CD4-positive, alpha-beta T cell (primary cell): ENCODE measurements at regions of chr12 and their contacts with region 1.

Region 1: GRCh38 chr12:89709157-89709994 is 738 bp upstream of the ATP2B1 start:
- DNase-seq: peak; percentile 97 to 100 (median 99)
- ATAC-seq: peak; percentile 77
- H3K4me3 ChIP-seq: peak overlapping the region; percentile 99
- H3K4me3 Mint-ChIP-seq: peak overlapping the region; percentile 98
- H3K27ac ChIP-seq: peak overlapping the region; percentile 88 to 97
- H3K27ac Mint-ChIP-seq: peak overlapping the region; percentile 97
- H3K4me1 ChIP-seq: peaks cover 25% of the 10 kb centered on the region
- H3K4me1 Mint-ChIP-seq: peaks cover 43% of the 10 kb centered on the region
- H3K27me3 ChIP-seq: no peaks in the 10 kb centered on the region
- H3K27me3 Mint-ChIP-seq: no peaks in the 10 kb centered on the region
- CTCF ChIP-seq: no peak

Region 2: DNA sequence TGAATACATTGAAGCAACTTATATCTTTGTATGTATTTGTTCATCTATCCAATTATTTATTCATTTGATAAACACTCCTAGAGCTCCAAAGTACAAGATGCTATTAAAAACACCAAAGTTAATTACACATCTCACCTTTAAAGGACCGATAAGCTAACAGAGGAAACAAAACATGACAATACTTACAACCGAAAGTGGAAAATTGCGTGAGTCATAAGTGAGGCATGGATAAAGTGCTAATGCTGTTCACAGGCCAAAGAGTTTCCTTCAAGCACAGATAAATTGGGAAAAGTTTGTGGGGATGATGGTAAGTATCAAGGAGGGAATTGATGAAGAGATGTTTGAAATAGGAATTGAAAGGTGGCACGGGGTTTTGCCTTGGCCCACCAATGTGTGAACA is 956.3 kb before region 1 on chr12:
- CTCF ChIA-PET with region 1: no interaction called
- POLR2A ChIA-PET with region 1: no interaction called
- intact Hi-C with region 1: no loop called
- DNase-seq: no peak
- ATAC-seq: no peak
- H3K4me3 ChIP-seq: no peak overlapping the region
- H3K4me3 Mint-ChIP-seq: no peak overlapping the region
- H3K27ac ChIP-seq: no peak overlapping the region
- H3K27ac Mint-ChIP-seq: no peak overlapping the region
- H3K4me1 ChIP-seq: no peaks in the 10 kb centered on the region
- H3K4me1 Mint-ChIP-seq: no peaks in the 10 kb centered on the region
- H3K27me3 ChIP-seq: no peaks in the 10 kb centered on the region
- H3K27me3 Mint-ChIP-seq: no peaks in the 10 kb centered on the region
- CTCF ChIP-seq: no peak

Region 3: DNA sequence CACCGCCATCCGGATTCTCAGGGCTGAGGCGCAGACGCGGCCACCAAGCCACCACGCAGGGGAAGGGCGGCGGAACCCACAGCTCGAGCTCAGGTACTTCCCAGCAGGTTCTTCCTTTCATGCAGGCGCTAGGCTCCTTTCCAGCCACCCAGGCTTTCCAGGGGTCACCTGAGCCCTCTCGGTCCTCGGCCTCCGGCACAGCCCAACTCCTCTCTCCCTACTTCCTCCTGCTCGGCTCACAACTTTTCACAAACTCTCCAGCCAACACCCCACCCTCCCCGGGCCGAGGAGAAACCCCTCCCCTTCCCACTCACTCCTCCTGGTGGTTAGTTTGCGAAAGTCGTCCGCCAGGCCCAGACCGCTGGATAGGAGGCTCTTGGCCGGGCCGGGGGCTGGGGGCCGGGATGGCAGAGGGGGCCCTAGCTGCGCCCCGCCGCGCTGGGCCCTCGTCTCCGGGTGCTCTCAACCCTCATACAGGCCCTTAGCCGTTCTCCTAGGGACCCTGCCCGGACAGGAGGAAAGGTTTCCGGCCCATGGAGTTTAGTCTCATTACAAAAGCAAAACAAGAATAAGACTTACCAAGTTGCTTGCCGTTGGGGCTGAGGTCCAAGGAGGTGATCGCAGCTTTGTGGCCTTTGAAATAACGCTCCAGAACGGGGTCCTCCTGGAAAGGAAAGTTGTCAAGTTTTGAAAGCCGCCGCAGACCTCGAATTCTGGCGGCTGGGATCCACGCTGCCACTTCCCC is 184.7 kb before region 1 on chr12 and contains the start of gene GALNT4:
- CTCF ChIA-PET with region 1: interaction called, 3 read pairs
- POLR2A ChIA-PET with region 1: interaction called, 14 read pairs
- intact Hi-C with region 1: loop called (anchors 5 kb)
- DNase-seq: peak; percentile 57 to 88 (median 68)
- ATAC-seq: peak; percentile 67
- H3K4me3 ChIP-seq: peak within 1 kb of the TSS; percentile 85
- H3K4me3 Mint-ChIP-seq: peak within 1 kb of the TSS; percentile 95
- H3K27ac ChIP-seq: peak within 1 kb of the TSS; percentile 80 to 84
- H3K27ac Mint-ChIP-seq: peak within 1 kb of the TSS; percentile 47
- H3K4me1 ChIP-seq: peaks cover 24% of the 10 kb centered on the region
- H3K4me1 Mint-ChIP-seq: peaks cover 58% of the 10 kb centered on the region
- H3K27me3 ChIP-seq: no peaks in the 10 kb centered on the region
- H3K27me3 Mint-ChIP-seq: no peaks in the 10 kb centered on the region
- CTCF ChIP-seq: peak; percentile 62
- total RNA-seq, gene GALNT4: 6.2 to 6.3 TPM

Region 4: DNA sequence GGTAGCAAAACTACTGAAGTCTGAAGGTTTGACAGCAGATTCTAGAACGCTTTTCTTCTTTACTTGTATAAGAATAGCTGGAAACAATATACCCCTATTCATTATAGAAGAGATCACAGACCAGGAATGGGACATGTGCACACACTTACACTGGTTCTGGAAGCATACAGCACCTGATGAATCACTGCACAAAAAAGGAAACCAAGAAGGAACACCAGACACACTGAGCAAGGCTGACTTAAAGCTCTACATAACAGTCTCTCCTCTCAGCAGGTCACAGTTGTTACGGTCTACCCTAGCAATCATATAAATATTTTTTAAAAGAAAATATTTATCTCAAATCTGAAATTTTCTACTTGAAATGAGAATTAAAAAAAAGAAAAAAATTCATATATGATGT is 14.3 kb before region 1 on chr12:
- CTCF ChIA-PET with region 1: interaction called, 13 read pairs
- POLR2A ChIA-PET with region 1: interaction called, 8 read pairs
- intact Hi-C with region 1: no loop called
- DNase-seq: no peak
- ATAC-seq: no peak
- H3K4me3 ChIP-seq: no peak overlapping the region
- H3K4me3 Mint-ChIP-seq: no peak overlapping the region
- H3K27ac ChIP-seq: no peak overlapping the region
- H3K27ac Mint-ChIP-seq: no peak overlapping the region
- H3K4me1 ChIP-seq: peaks cover 16% of the 10 kb centered on the region
- H3K4me1 Mint-ChIP-seq: peaks cover 93% of the 10 kb centered on the region
- H3K27me3 ChIP-seq: no peaks in the 10 kb centered on the region
- H3K27me3 Mint-ChIP-seq: no peaks in the 10 kb centered on the region
- CTCF ChIP-seq: no peak

Region 5: DNA sequence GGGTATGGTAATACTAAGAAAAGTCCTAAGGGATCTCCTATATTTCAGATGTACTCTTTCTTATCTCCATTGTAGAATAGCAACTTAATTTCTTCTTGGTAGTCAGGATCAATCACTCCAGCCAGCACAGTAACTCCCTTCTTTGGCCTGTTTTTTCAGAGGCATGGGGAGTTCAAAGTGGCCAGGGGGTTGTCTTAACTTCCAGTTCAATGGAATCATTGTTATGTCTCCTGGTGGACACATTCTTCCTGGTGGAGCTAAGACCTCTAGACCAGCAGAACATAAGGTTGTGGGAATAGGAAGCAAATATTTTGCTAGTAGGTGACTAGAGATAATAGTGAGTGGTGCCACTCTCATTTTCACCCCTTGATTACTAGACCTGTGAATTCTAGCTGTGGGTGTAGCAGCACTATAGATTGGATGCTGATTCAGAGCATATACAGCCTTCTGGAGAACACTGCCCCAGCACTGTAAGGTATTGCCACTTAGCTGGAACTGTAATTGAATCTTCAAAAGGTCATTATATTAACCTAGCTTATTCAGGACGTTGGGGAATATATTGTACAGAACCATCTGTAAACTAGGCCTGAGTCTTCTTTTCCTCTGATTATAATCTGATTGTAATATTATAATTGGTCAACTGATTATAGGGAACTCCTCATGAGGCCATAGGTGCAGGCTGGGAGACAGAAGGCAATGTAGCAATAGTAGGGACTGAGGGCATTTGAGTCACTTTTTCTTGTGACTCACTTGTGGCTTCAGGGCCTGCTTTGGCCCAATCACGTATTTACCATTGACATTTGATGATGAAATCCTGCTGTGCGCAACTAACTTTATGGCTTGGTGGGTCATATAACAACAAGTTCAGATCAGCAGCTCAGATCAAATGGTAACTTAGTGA is 59.5 kb after region 1 on chr12:
- CTCF ChIA-PET with region 1: no interaction called
- POLR2A ChIA-PET with region 1: interaction called, 15 read pairs
- intact Hi-C with region 1: no loop called
- DNase-seq: peak in 2 of 14 experiments; percentile 61 to 75
- ATAC-seq: no peak
- H3K4me3 ChIP-seq: no peak overlapping the region
- H3K4me3 Mint-ChIP-seq: no peak overlapping the region
- H3K27ac ChIP-seq: no peak overlapping the region
- H3K27ac Mint-ChIP-seq: no peak overlapping the region
- H3K4me1 ChIP-seq: peaks cover 13% of the 10 kb centered on the region
- H3K4me1 Mint-ChIP-seq: peaks cover 38% of the 10 kb centered on the region
- H3K27me3 ChIP-seq: no peaks in the 10 kb centered on the region
- H3K27me3 Mint-ChIP-seq: no peaks in the 10 kb centered on the region
- CTCF ChIP-seq: no peak

Region 6: GRCh38 chr12:89862511-89863179 is 153.3 kb after region 1 on chr12:
- CTCF ChIA-PET with region 1: interaction called, 6 read pairs
- POLR2A ChIA-PET with region 1: interaction called, 82 read pairs
- intact Hi-C with region 1: loop called (anchors 1 to 5 kb)
- DNase-seq: peak; percentile 18 to 88 (median 34)
- ATAC-seq: peak; percentile 24
- H3K4me3 ChIP-seq: peak overlapping the region; percentile 35
- H3K4me3 Mint-ChIP-seq: peak overlapping the region; percentile 66
- H3K27ac ChIP-seq: peak overlapping the region; percentile 76 to 88
- H3K27ac Mint-ChIP-seq: peak overlapping the region; percentile 87
- H3K4me1 ChIP-seq: peaks cover 36% of the 10 kb centered on the region
- H3K4me1 Mint-ChIP-seq: peaks cover 71% of the 10 kb centered on the region
- H3K27me3 ChIP-seq: no peaks in the 10 kb centered on the region
- H3K27me3 Mint-ChIP-seq: no peaks in the 10 kb centered on the region
- CTCF ChIP-seq: no peak

Region 7: DNA sequence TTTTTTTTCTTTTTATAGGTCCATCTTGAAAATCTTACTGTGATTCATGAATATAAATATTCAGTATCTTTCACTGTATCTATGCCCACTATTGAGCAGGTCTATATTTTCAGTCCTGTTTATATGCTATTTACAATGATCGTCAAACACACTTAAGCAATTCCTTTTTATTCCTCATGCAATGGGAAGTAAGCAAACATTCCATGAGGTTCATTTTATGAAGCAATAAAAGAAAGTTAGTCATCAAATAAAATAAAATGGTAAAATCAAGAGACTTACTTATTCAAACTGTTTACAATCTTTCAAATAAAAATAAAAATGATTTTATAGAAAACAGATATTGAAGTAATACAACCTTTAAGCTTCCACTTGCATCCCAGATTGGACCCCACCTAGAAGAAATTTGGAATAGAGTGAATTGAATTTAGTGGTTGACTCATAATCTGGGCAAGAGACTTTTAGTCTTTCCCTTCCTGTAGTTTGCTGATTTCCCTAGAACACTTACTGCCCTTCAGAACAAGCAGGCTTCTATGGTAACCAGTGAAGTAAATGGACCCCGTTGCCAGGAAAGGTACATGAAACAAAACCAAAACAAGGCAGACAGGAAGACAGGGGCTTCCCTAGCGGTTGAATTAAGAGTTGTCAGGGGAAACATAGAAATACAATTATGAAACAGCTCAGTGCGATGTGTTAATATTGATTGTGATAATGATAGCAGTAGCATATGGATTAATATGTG is 240.2 kb after region 1 on chr12:
- CTCF ChIA-PET with region 1: interaction called, 8 read pairs
- POLR2A ChIA-PET with region 1: interaction called, 21 read pairs
- intact Hi-C with region 1: loop called (anchors 2 to 5 kb)
- DNase-seq: peak in 11 of 14 experiments; percentile 15 to 94 (median 39)
- ATAC-seq: peak; percentile 91
- H3K4me3 ChIP-seq: no peak overlapping the region
- H3K4me3 Mint-ChIP-seq: peak overlapping the region; percentile 35
- H3K27ac ChIP-seq: peak overlapping the region in 1 of 2 donors; percentile 78
- H3K27ac Mint-ChIP-seq: peak overlapping the region; percentile 61
- H3K4me1 ChIP-seq: peaks cover 18% of the 10 kb centered on the region
- H3K4me1 Mint-ChIP-seq: peaks cover 55% of the 10 kb centered on the region
- H3K27me3 ChIP-seq: no peaks in the 10 kb centered on the region
- H3K27me3 Mint-ChIP-seq: no peaks in the 10 kb centered on the region
- CTCF ChIP-seq: peak; percentile 58

Region 8: GRCh38 chr12:90102957-90103652 is 393.7 kb after region 1 on chr12:
- CTCF ChIA-PET with region 1: interaction called, 6 read pairs
- POLR2A ChIA-PET with region 1: interaction called, 7 read pairs
- intact Hi-C with region 1: loop called (anchors 10 kb)
- DNase-seq: peak in 4 of 14 experiments; percentile 22 to 68 (median 62)
- ATAC-seq: peak; percentile 82
- H3K4me3 ChIP-seq: peak overlapping the region; percentile 13
- H3K4me3 Mint-ChIP-seq: peak overlapping the region; percentile 56
- H3K27ac ChIP-seq: no peak overlapping the region
- H3K27ac Mint-ChIP-seq: no peak overlapping the region
- H3K4me1 ChIP-seq: no peaks in the 10 kb centered on the region
- H3K4me1 Mint-ChIP-seq: peaks cover 17% of the 10 kb centered on the region
- H3K27me3 ChIP-seq: no peaks in the 10 kb centered on the region
- H3K27me3 Mint-ChIP-seq: no peaks in the 10 kb centered on the region
- CTCF ChIP-seq: peak; percentile 76